Heart right ventricle (tissue), 16 donors: ENCODE measurements at regions of chr21 and their contacts with region 1.

Region 1: DNA sequence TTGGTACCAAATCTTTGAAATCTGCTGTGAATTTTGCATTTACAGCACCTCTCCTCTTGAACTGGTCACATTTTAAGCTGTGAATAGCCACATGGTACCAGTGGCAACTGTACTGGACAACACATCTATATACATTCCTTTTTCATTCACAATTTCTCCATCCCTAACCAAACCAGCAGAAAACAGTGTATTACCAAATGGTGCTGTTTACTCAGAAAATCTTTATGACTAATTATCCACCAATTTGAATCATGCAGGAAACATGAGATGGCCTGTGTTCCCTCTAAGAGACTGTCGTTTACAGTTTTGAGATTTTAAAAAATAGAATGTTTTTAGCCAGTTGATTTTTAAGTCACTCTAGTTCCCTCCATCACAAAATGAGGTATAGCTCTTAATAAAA is 17.6 kb upstream of the CCT8 start:
- DNase-seq: no peak
- ATAC-seq: no peak
- H3K4me3 ChIP-seq: no peak overlapping the region
- H3K27ac ChIP-seq: peak overlapping the region in 1 of 10 donors; percentile 15
- H3K4me1 ChIP-seq: peaks cover 0 to 28% (median 4%) of the 10 kb centered on the region in 9 donors
- H3K27me3 ChIP-seq: no peaks in the 10 kb centered on the region
- CTCF ChIP-seq: no peak

Region 2: GRCh38 chr21:28856588-28857250 is 234.3 kb before region 1 on chr21:
- intact Hi-C with region 1: no loop called
- DNase-seq: no peak
- ATAC-seq: peak in 2 of 8 donors; percentile 39 to 53
- H3K4me3 ChIP-seq: no peak overlapping the region
- H3K27ac ChIP-seq: no peak overlapping the region
- H3K4me1 ChIP-seq: peaks cover 0 to 17% (median 0%) of the 10 kb centered on the region in 9 donors
- H3K27me3 ChIP-seq: no peaks in the 10 kb centered on the region
- CTCF ChIP-seq: no peak

Region 3: DNA sequence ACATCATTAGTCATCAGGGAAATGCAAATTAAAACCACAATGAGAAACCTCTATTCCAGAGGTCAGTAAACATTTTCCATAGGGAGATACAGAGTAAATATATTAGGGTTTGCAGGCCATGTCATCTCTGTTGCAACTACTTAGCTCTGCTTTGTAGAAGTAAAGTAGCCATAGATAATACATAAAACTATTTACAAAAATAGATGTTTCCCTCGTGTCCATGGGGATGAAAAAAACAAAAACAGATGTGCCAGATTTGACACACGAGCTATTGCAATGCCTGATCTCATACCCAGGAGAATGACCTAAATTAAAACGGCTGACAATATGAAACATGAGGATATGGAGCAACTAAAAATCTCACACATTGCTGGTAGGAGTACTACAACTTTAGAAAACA is 115.6 kb before region 1 on chr21:
- intact Hi-C with region 1: no loop called
- DNase-seq: no peak
- ATAC-seq: peak in 4 of 8 donors; percentile 37 to 59 (median 43)
- H3K4me3 ChIP-seq: no peak overlapping the region
- H3K27ac ChIP-seq: peak overlapping the region in 2 of 10 donors; percentile 10 to 17
- H3K4me1 ChIP-seq: peaks cover 0 to 24% (median 6%) of the 10 kb centered on the region in 9 donors
- H3K27me3 ChIP-seq: no peaks in the 10 kb centered on the region
- CTCF ChIP-seq: no peak

Region 4: DNA sequence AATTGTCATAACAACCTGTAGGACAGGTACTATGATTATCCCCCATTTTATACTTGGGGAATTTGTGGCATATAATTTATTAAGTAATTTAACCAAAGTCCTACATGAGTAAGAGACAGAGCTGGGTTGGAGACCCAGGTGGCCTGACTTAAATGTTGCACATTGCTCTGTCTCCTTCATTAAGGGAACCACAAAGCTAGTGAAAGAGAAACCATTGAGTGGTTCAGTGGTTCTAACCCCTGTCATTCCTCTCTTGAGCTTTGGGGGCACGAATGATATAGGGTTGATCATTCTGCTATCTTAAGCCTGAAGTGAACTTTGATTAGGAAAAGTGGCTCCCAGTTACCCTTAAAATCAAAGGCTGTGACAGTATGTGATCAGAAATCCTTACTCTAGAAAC is 34.2 kb after region 1 on chr21:
- intact Hi-C with region 1: loop called in 1 of 10 experiments (anchors 5 kb)
- DNase-seq: no peak
- ATAC-seq: no peak
- H3K4me3 ChIP-seq: no peak overlapping the region
- H3K27ac ChIP-seq: no peak overlapping the region
- H3K4me1 ChIP-seq: peaks cover 0 to 3% (median 0%) of the 10 kb centered on the region in 9 donors
- H3K27me3 ChIP-seq: no peaks in the 10 kb centered on the region
- CTCF ChIP-seq: no peak

Region 5: GRCh38 chr21:29145354-29145782 is 54.3 kb after region 1 on chr21:
- intact Hi-C with region 1: loop called in 4 of 10 experiments (anchors 5 to 10 kb)
- DNase-seq: peak in 1 of 2 donors; percentile 37
- ATAC-seq: peak; percentile 68 to 86 (median 82)
- H3K4me3 ChIP-seq: no peak overlapping the region
- H3K27ac ChIP-seq: peak overlapping the region in 9 of 10 donors; percentile 4 to 88 (median 78)
- H3K4me1 ChIP-seq: peaks cover 0 to 56% (median 27%) of the 10 kb centered on the region in 9 donors
- H3K27me3 ChIP-seq: no peaks in the 10 kb centered on the region
- CTCF ChIP-seq: no peak

Region 6: DNA sequence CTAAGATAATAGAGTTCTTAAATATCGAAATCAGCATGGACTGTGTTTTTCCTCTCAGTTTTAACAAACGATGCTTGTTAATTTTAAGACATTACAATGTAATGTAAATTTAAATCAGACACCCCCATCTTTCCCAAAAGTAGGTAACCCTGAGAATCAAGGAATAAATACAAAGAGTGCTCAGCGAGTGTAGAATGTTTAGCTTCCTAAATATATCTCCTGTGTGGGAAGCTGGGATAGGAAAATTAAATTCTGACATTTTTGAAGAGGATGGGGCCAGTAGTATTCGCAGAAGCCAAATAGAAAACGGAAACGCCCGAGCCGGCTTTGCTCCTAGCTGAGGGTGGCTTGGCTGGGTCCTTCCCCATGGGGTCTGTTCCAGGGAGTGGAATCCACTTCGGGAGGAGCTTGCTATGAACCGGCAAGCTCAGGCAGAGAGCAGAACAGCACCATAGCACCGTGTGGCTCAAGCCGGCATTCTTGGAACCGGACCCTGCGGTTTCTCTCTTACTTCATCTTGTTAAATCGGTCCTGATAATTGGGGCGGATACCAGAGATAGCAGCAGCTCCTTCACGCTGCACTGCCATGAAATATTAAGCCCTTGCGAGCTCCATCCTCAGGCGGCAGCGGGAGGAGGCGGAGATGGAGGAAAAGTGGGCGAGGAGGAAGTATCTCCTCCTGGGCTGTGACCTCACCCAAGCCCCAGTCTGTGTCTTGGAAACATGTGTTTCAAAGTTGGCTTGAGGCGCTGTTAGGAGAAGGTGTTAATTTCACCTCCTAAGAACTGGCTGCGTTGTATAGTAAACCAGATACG is 64.3 kb after region 1 on chr21:
- intact Hi-C with region 1: loop called in 7 of 10 experiments (anchors 5 to 10 kb)
- DNase-seq: peak; percentile 67 to 74
- ATAC-seq: peak; percentile 83 to 96 (median 94)
- H3K4me3 ChIP-seq: peak overlapping the region in 7 of 10 donors; percentile 28 to 47 (median 41)
- H3K27ac ChIP-seq: peak overlapping the region in 9 of 10 donors; percentile 28 to 81 (median 61)
- H3K4me1 ChIP-seq: peaks cover 0 to 38% (median 19%) of the 10 kb centered on the region in 9 donors
- H3K27me3 ChIP-seq: no peaks in the 10 kb centered on the region
- CTCF ChIP-seq: peak in 2 of 9 donors; percentile 9 to 22

Region 7: DNA sequence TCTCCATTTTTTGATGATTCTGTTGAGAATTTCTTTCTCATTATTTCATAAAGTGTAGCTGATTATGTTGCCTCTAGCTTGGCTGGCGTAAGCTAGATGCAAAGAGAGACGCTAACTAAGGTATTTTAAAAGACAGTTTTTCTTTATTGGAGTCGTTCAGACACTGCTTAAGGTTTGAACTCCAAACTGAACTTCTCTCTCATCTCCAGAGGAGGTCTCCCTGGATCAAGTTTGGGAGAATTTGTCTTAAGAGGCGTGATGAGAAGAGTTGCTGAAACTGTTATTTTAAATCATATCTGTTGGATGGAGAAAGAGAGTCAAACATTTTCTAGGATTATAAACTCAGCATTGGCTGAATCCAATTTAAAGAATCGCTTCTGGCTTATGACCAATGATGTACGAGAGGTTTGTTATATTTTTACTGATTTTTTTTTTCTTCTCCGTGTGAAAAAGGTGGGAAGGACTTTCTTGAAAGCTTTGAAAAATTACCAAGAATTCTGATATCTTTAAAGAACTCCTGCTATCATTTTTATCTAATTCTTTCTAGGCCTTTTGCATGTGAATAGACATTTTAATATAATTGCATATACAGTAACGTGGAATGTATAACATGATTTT is 73.4 kb after region 1 on chr21:
- intact Hi-C with region 1: loop called in 7 of 10 experiments (anchors 5 to 10 kb)
- DNase-seq: no peak
- ATAC-seq: peak in 7 of 8 donors; percentile 73 to 86 (median 82)
- H3K4me3 ChIP-seq: no peak overlapping the region
- H3K27ac ChIP-seq: peak overlapping the region in 7 of 10 donors; percentile 2 to 84 (median 46)
- H3K4me1 ChIP-seq: peaks cover 0 to 58% (median 17%) of the 10 kb centered on the region in 9 donors
- H3K27me3 ChIP-seq: no peaks in the 10 kb centered on the region
- CTCF ChIP-seq: peak; percentile 29 to 85 (median 69)

Region 8: GRCh38 chr21:29372063-29372802 is 281.2 kb after region 1 on chr21:
- intact Hi-C with region 1: loop called (anchors 1 to 5 kb)
- DNase-seq: peak in 1 of 2 donors; percentile 80
- ATAC-seq: peak; percentile 86 to 94 (median 92)
- H3K4me3 ChIP-seq: no peak overlapping the region
- H3K27ac ChIP-seq: no peak overlapping the region
- H3K4me1 ChIP-seq: peaks cover 0 to 5% (median 0%) of the 10 kb centered on the region in 9 donors
- H3K27me3 ChIP-seq: no peaks in the 10 kb centered on the region
- CTCF ChIP-seq: peak; percentile 67 to 83 (median 74)

Region 9: GRCh38 chr21:29849735-29850176 is 758.7 kb after region 1 on chr21:
- intact Hi-C with region 1: loop called in 4 of 10 experiments (anchors 5 to 10 kb)
- DNase-seq: peak in 1 of 2 donors; percentile 39
- ATAC-seq: peak; percentile 69 to 92 (median 77)
- H3K4me3 ChIP-seq: no peak overlapping the region
- H3K27ac ChIP-seq: no peak overlapping the region
- H3K4me1 ChIP-seq: no peaks in the 10 kb centered on the region
- H3K27me3 ChIP-seq: peaks cover 0 to 11% (median 0%) of the 10 kb centered on the region in 7 donors
- CTCF ChIP-seq: peak; percentile 35 to 81 (median 71)